Activated B cell treated with CpG ODN at 0.5 μM for 24 hours (primary cell): ENCODE measurements at regions of chr1 and their contacts with region 1.

Region 1: DNA sequence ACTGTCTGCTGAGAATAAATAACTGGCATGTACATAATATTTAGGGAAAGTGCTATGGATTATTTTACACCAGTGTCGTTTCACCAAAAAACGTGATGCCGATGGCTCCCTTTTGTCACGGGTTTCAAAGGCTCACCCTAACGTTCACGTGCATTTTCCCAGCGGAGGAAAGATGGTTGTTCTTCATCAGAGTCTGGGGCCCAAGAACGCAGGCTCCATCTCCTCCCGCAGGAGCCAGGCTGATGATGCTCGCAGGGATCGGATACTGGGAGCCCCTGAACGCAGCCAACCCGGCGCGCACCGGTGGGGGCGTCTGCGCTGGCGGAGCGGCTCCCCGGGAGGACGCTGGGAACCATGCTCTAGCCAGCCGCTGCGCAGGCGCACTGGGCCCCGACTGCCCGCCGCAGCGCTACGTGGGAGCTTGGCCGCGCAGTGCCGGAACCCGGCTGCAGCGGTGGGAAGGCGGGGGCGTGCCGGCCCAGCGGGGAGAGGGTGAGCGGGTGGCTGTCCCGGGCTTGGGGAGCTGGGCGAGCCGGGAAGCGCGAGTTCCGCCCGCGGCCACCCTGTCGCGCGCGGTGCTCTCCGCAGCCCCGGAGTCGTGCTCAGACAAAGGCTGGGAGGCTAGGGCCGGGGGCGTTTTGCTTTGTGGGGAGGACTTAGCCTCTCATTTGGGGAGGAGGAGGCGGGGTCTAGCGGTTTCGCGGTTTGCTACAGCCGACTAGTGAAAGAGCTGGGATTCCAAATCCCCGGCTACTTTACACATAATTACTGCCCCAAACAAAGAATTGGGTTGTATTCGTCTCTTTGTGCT is at the start of gene ZFP69B:
- DNase-seq: peak; percentile 97
- ATAC-seq: peak; percentile 80
- H3K4me3 Mint-ChIP-seq: peak within 1 kb of the TSS; percentile 86
- H3K27ac Mint-ChIP-seq: peak within 1 kb of the TSS; percentile 90
- H3K4me1 Mint-ChIP-seq: peaks cover 30% of the 10 kb centered on the region
- H3K27me3 Mint-ChIP-seq: no peaks in the 10 kb centered on the region
- CTCF ChIP-seq: no peak
- total RNA-seq, gene ZFP69B: 8.9 and 10.4 TPM in 2 replicates

Region 2: GRCh38 chr1:40040511-40041465 is 409.1 kb before region 1 on chr1 and contains the start of gene CAP1:
- CTCF ChIA-PET with region 1: no interaction called
- POLR2A ChIA-PET with region 1: no interaction called
- intact Hi-C with region 1: no loop called
- DNase-seq: peak; percentile 100
- ATAC-seq: peak; percentile 85
- H3K4me3 Mint-ChIP-seq: peak within 1 kb of the TSS; percentile 98
- H3K27ac Mint-ChIP-seq: peak within 1 kb of the TSS; percentile 94
- H3K4me1 Mint-ChIP-seq: peaks cover 78% of the 10 kb centered on the region
- H3K27me3 Mint-ChIP-seq: no peaks in the 10 kb centered on the region
- CTCF ChIP-seq: no peak
- total RNA-seq, gene CAP1: 410 and 411 TPM in 2 replicates

Region 3: DNA sequence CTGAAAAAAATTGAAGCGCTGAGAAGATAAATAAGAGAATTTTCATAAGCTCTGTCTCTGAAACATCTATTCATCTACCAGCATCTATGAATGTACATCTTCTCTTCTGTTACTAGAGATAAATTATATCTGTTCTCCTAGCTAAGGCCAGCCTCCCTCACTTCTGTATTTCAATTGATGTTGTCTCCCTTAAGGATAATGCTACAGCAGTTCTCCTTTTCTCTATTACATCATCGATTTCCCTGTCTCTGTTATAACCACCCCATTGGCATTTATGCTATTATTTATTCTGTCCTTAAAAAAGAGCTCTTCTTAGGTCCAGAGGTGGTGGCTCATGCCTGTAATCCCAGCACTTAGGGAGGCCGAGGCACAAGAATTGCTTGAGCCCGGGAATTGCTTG is 245.0 kb before region 1 on chr1:
- CTCF ChIA-PET with region 1: no interaction called
- POLR2A ChIA-PET with region 1: no interaction called
- intact Hi-C with region 1: no loop called
- DNase-seq: no peak
- ATAC-seq: no peak
- H3K4me3 Mint-ChIP-seq: no peak overlapping the region
- H3K27ac Mint-ChIP-seq: no peak overlapping the region
- H3K4me1 Mint-ChIP-seq: peaks cover 17% of the 10 kb centered on the region
- H3K27me3 Mint-ChIP-seq: no peaks in the 10 kb centered on the region
- CTCF ChIP-seq: no peak

Region 4: GRCh38 chr1:40373338-40374283 is 76.3 kb before region 1 on chr1 and contains the start of gene SMAP2:
- CTCF ChIA-PET with region 1: no interaction called
- POLR2A ChIA-PET with region 1: interaction called, 9 read pairs
- intact Hi-C with region 1: loop called (anchors 5 kb)
- DNase-seq: peak; percentile 91
- ATAC-seq: peak; percentile 88
- H3K4me3 Mint-ChIP-seq: peak within 1 kb of the TSS; percentile 97
- H3K27ac Mint-ChIP-seq: peak within 1 kb of the TSS; percentile 96
- H3K4me1 Mint-ChIP-seq: peaks cover 52% of the 10 kb centered on the region
- H3K27me3 Mint-ChIP-seq: no peaks in the 10 kb centered on the region
- CTCF ChIP-seq: no peak
- total RNA-seq, gene SMAP2: 202 and 220 TPM in 2 replicates

Region 5: GRCh38 chr1:40379785-40380452 is 70.0 kb before region 1 on chr1:
- CTCF ChIA-PET with region 1: no interaction called
- POLR2A ChIA-PET with region 1: interaction called, 15 read pairs
- intact Hi-C with region 1: no loop called
- DNase-seq: no peak
- ATAC-seq: no peak
- H3K4me3 Mint-ChIP-seq: peak overlapping the region; percentile 83
- H3K27ac Mint-ChIP-seq: peak overlapping the region; percentile 96
- H3K4me1 Mint-ChIP-seq: peaks cover 94% of the 10 kb centered on the region
- H3K27me3 Mint-ChIP-seq: no peaks in the 10 kb centered on the region
- CTCF ChIP-seq: no peak

Region 6: GRCh38 chr1:40438391-40439015 is 11.4 kb before region 1 on chr1:
- CTCF ChIA-PET with region 1: interaction called, 14 read pairs
- POLR2A ChIA-PET with region 1: interaction called, 4 read pairs
- intact Hi-C with region 1: no loop called
- DNase-seq: no peak
- ATAC-seq: peak; percentile 49
- H3K4me3 Mint-ChIP-seq: no peak overlapping the region
- H3K27ac Mint-ChIP-seq: no peak overlapping the region
- H3K4me1 Mint-ChIP-seq: peaks cover 4% of the 10 kb centered on the region
- H3K27me3 Mint-ChIP-seq: no peaks in the 10 kb centered on the region
- CTCF ChIP-seq: no peak

Region 7: DNA sequence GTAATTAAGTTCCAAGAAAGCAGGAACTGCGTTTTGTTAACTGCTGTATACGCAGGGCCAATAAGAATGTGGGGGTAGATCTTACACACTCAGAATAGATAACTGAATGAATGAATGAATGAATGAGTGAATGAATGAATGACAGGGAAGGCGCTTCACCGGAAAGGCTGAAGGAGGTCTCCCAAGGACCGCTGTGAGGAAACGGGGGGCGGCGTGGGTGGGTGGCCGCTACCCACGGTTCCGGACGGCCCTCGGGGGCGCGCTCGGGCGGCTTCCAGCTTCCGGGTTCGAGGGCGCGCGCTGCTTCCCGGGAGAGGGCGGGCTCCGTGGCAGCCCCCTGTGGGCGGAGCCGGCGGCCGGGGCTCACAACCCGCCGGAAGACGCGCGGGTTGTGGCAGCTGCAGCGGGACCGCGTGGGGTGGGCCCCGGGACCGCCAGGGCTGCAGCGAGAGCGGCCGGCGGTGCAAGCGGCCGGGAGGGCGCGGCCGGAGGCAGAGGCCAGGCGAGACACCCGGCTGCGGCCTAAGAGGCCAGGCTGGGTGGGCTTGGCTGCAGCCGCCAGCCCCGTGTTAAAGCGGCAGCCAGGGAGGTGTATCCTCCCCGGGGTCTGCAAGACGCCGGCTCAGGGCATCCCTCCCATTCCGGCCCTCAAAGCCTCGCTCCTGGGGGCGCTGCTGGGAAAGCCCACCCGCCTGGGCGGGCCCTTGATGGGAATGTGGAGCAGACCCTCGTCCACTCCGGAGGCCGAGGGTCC is 27.2 kb after region 1 on chr1 and contains the start of gene ZFP69:
- CTCF ChIA-PET with region 1: no interaction called
- POLR2A ChIA-PET with region 1: interaction called, 18 read pairs
- intact Hi-C with region 1: loop called (anchors 1 kb)
- DNase-seq: peak; percentile 79
- ATAC-seq: peak; percentile 97
- H3K4me3 Mint-ChIP-seq: peak within 1 kb of the TSS; percentile 85
- H3K27ac Mint-ChIP-seq: peak within 1 kb of the TSS; percentile 87
- H3K4me1 Mint-ChIP-seq: peaks cover 17% of the 10 kb centered on the region
- H3K27me3 Mint-ChIP-seq: no peaks in the 10 kb centered on the region
- CTCF ChIP-seq: no peak
- total RNA-seq, gene ZFP69: 4.5 and 5.1 TPM in 2 replicates

Region 8: DNA sequence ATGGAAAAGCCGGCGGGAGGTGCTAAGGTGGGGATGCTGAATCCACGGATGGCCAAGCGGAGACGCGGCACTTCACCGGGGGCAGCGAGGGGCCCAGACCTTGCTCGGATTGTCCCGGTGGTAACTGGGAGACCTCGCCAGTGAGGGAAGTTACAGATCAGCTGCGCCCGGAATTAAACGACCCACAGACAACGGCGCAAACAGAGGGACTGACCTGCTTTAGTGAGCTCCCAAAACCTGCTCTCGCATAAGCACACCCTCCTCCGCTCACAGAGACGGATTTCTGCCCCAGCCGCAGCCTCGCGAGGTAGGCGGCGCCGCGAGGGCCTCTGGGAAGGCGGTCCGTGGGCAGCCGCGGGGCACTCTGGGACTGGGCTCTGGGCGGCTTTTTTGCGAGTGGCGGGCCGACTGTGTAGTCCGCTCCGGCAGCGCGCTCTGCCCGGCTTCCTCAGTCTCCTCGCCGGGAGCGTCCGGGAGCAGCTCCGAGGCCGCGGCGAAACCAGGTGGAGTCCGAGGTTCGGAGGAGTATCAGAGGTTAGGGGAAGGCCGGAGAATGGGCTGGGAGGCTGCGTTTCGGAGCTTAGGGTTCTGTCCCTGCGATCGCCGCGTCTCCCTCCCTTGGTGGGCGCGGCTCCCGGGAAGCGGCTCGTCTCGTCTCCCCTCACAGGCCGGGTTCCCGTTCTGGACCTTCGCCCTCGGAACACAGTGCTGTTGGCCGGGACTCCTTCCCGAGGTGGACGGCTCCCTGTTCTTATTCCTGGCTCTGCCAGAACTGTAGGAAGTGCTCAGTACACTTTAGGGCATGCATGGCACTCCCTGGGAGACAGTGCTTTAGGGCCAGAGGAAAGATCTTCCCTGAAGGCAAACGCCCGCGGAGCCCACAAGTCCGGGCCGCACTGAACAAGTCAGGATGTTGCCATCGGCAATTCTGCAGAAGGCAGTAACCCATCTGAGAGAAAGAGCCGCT is 58.8 kb after region 1 on chr1 and contains the start of gene EXO5:
- CTCF ChIA-PET with region 1: no interaction called
- POLR2A ChIA-PET with region 1: interaction called, 9 read pairs
- intact Hi-C with region 1: loop called (anchors 1 kb)
- DNase-seq: peak; percentile 78
- ATAC-seq: peak; percentile 98
- H3K4me3 Mint-ChIP-seq: peak within 1 kb of the TSS; percentile 94
- H3K27ac Mint-ChIP-seq: peak within 1 kb of the TSS; percentile 81
- H3K4me1 Mint-ChIP-seq: peaks cover 18% of the 10 kb centered on the region
- H3K27me3 Mint-ChIP-seq: no peaks in the 10 kb centered on the region
- CTCF ChIP-seq: no peak
- total RNA-seq, gene EXO5: 11.4 and 13.8 TPM in 2 replicates

Region 9: DNA sequence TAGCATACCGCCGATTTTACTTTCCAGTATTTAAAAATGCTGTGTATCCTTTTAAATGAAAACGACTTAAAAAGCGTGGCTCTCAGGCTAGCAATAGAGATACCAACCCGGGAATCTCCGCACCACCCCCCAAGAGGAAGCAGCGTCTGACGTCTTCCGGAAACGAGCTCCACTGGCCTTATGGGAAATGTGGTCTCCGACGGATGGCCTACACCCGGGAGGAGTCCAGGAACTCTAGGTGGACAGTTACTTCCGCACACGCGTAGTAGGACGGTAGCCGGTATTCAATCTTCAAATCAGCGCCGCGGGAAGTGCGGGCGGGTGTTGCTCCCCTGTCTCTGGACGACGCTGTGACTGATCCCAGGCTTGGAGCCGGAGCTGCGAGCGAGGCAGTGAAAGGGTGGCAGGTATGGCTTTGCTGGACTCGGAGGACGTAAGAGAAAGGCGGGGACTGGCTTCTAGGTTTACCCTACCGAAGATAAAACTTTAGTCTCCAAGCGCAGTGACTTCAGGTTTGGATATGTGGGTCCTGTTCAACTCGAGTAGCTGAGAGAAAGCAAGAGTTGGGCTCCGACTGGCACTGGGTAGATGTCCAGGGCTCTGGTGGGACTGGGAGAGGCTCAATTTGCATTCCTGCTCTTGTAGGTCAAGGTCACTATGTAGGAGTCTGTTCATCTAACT is 81.6 kb after region 1 on chr1 and contains the start of gene ZNF684:
- CTCF ChIA-PET with region 1: interaction called, 4 read pairs
- POLR2A ChIA-PET with region 1: interaction called, 8 read pairs
- intact Hi-C with region 1: loop called (anchors 1 kb)
- DNase-seq: peak; percentile 65
- ATAC-seq: peak; percentile 98
- H3K4me3 Mint-ChIP-seq: peak within 1 kb of the TSS; percentile 97
- H3K27ac Mint-ChIP-seq: peak within 1 kb of the TSS; percentile 92
- H3K4me1 Mint-ChIP-seq: peaks cover 29% of the 10 kb centered on the region
- H3K27me3 Mint-ChIP-seq: peaks cover 2% of the 10 kb centered on the region
- CTCF ChIP-seq: no peak
- total RNA-seq, gene ZNF684: 5.0 and 5.4 TPM in 2 replicates